Gastrocnemius medialis (tissue), 4 donors: ENCODE measurements at regions of chr18 and their contacts with region 1.

Region 1: GRCh38 chr18:54269893-54270844 is 852 bp downstream of the POLI start:
- DNase-seq: peak; percentile 13 to 29
- ATAC-seq: peak; percentile 28 to 44
- H3K4me3 ChIP-seq: peak overlapping the region; percentile 69 to 84 (median 82)
- H3K27ac ChIP-seq: peak overlapping the region; percentile 82 to 90 (median 86)
- H3K4me1 ChIP-seq: peaks cover 3 to 6% of the 10 kb centered on the region in 2 donors
- H3K27me3 ChIP-seq: no peaks in the 10 kb centered on the region
- CTCF ChIP-seq: peak in 2 of 5 experiments; percentile 29 to 40
- POLR2A ChIP-seq: no peak

Region 2: GRCh38 chr18:54127759-54128378 is 142.3 kb before region 1 on chr18:
- in situ Hi-C with region 1: no loop called
- intact Hi-C with region 1: no loop called
- DNase-seq: no peak
- ATAC-seq: no peak
- H3K4me3 ChIP-seq: no peak overlapping the region
- H3K27ac ChIP-seq: no peak overlapping the region
- H3K4me1 ChIP-seq: no peaks in the 10 kb centered on the region
- H3K27me3 ChIP-seq: no peaks in the 10 kb centered on the region
- CTCF ChIP-seq: peak in 1 of 5 experiments; percentile 24
- POLR2A ChIP-seq: no peak

Region 3: DNA sequence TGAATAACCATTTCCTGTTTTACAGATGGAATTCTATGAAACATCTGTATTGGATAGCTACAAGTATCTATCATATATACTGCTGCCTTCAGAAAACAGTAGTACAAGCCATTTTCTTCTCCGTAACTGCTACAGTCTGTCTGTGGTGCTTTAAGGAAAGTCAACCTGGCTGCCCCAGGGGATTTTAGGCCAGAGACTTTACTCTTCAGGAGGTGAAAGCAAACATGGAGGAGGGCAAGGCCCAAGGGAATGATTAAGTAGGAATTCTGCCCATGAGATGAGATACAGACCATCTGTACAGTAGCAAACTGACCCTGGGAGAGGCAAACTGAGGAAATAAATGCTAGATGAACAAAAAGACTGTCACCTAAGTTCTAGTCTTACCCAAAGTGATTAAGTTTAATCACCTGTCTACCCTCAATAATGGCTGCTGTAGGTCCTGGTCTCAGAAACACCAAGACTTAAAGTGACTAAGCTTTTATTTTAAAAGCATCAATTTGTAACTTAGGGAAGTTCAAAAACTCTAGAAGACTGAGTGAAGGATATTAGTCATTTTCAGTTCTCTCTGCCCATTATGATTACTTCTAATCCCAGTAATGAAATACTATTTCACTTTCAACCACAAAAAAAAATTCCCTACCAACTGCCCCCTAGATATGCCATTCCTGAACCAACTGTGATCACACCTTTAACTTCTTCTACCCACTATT is 60.5 kb before region 1 on chr18:
- in situ Hi-C with region 1: loop called in 1 of 4 experiments (anchors 10 kb)
- intact Hi-C with region 1: no loop called
- DNase-seq: no peak
- ATAC-seq: no peak
- H3K4me3 ChIP-seq: no peak overlapping the region
- H3K27ac ChIP-seq: no peak overlapping the region
- H3K4me1 ChIP-seq: peaks cover 11 to 15% of the 10 kb centered on the region in 2 donors
- H3K27me3 ChIP-seq: no peaks in the 10 kb centered on the region
- CTCF ChIP-seq: no peak
- POLR2A ChIP-seq: no peak

Region 4: DNA sequence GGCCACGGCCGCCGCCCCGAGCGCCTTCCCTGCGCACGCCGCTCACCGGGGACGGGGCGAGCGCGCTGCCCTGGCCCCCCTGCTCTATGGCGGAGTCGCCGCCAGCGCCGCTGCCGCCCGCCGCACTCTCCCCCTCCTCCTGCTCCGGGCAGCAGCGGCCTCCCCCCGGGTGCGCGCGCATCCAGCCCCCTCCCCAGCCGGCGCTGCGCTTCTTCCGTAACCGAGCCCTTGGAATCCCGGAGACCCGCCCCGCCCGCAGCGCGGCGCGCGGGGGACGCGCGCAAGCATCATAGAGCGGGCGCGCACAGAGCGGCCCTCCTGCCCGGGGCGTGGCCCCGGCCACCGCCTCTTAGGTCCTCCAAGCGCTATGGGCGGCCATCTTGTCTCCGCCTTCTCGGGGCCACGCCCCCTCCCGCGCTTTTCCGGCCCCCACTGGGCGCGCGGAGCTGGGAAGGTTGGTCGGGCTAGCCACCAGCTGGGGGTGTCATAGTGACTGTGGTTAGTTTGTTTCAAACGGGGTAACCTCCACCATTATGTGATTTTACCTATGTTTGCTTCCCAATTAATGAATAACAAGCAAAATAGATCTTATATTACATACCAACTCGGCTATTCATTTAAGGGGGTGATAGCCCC is 45.7 kb before region 1 on chr18 and contains the start of gene MBD2:
- in situ Hi-C with region 1: loop called in 2 of 4 experiments (anchors 10 kb)
- intact Hi-C with region 1: loop called (anchors 1 kb)
- DNase-seq: peak; percentile 83 to 91
- ATAC-seq: peak; percentile 94 to 96
- H3K4me3 ChIP-seq: peak within 1 kb of the TSS; percentile 61 to 73 (median 66)
- H3K27ac ChIP-seq: peak within 1 kb of the TSS; percentile 77 to 81 (median 79)
- H3K4me1 ChIP-seq: peaks cover 13 to 17% of the 10 kb centered on the region in 2 donors
- H3K27me3 ChIP-seq: no peaks in the 10 kb centered on the region
- CTCF ChIP-seq: peak in 1 of 5 experiments; percentile 22
- POLR2A ChIP-seq: peak; percentile 71 to 74
- total RNA-seq, gene MBD2: 12.7 to 21.7 (median 19.3) TPM

Region 5: DNA sequence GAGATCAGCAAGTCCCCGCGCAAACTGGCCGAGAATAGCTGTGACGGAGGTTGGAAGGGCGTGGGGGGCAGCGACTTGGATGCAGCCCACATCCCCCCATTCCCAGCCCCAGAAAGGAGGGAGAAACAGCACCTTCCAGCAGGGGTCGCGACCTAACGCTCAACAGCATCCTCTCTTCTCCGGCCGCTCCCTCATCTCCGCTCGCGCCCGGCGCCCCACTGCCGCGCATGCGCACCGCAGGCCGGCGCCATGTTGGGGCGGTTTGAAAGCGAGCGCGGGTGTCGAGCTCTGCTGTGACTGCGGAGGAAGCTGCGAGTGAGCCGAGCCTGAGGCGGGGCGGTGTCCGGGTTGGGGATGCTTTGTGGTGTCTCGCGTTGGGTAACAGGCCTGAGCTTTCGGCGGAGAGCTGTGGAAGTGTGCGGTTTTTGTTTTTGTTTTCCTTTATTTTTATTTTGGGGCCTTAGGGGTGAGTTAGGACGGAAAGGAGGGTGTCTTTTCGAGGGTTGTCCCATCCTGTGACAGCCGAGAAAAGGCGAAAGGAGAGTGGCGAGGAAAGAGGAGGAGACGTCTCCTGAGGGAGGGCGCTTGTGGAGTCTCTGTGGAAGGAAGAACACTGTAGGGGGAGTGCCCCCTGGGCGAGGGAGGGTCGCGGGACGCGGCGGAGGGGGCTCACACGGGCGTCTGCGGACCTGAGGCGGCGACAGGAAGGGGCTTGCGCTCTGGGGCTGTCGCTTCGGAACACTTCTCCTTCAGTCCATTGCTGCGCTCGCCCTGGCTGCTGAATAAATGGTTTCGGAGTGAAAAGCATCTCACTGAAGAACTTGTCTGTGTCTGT is 87.7 kb after region 1 on chr18 and contains the starts of genes C18orf54 and STARD6:
- in situ Hi-C with region 1: no loop called
- intact Hi-C with region 1: loop called (anchors 10 kb)
- DNase-seq: peak; percentile 54 to 64
- ATAC-seq: peak; percentile 86 to 94
- H3K4me3 ChIP-seq: peak within 1 kb of the TSS; percentile 63 to 87 (median 70)
- H3K27ac ChIP-seq: peak within 1 kb of the TSS in 3 of 4 donors; percentile 51 to 56 (median 52)
- H3K4me1 ChIP-seq: peaks cover 6 to 10% of the 10 kb centered on the region in 2 donors
- H3K27me3 ChIP-seq: peaks cover 0 to 19% (median 15%) of the 10 kb centered on the region in 3 donors
- CTCF ChIP-seq: peak in 1 of 5 experiments; percentile 17
- POLR2A ChIP-seq: peak; percentile 9 to 11
- total RNA-seq, gene C18orf54: 0.26 to 0.87 (median 0.44) TPM in 3 of 4 donors, not detected in the other
- total RNA-seq, gene STARD6: not detected

Region 6: DNA sequence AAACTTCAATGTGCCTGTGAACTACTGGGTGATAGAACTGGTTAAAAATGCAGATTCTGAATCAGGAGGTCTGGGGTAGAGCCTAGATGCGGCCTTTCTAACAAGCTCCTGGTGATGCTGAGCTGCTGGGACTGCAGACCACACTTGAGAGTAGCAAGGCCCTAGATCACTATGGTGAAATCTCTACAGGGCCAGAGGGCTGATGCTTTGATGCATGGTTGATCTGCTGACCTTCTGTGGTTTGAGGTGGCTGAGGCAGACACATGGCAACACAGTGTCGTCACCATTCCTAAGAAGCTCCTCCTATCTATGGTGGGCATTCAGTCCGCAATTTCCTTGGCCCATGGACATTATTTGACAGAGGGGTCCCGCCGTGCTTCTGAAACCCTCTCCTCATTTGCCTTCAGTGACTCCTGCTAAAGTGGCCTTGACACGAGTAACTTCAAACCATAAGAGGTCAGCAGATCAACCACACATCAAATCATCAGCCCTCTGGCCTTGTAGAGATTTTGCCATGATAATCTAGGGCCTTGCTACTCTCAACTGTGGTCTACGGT is 669.3 kb after region 1 on chr18:
- in situ Hi-C with region 1: no loop called
- intact Hi-C with region 1: no loop called
- DNase-seq: no peak
- ATAC-seq: no peak
- H3K4me3 ChIP-seq: no peak overlapping the region
- H3K27ac ChIP-seq: no peak overlapping the region
- H3K4me1 ChIP-seq: no peaks in the 10 kb centered on the region
- H3K27me3 ChIP-seq: no peaks in the 10 kb centered on the region
- CTCF ChIP-seq: no peak
- POLR2A ChIP-seq: no peak